ENCODE measurements at regions of chr12 and their contacts with region 1.

Region 1: DNA sequence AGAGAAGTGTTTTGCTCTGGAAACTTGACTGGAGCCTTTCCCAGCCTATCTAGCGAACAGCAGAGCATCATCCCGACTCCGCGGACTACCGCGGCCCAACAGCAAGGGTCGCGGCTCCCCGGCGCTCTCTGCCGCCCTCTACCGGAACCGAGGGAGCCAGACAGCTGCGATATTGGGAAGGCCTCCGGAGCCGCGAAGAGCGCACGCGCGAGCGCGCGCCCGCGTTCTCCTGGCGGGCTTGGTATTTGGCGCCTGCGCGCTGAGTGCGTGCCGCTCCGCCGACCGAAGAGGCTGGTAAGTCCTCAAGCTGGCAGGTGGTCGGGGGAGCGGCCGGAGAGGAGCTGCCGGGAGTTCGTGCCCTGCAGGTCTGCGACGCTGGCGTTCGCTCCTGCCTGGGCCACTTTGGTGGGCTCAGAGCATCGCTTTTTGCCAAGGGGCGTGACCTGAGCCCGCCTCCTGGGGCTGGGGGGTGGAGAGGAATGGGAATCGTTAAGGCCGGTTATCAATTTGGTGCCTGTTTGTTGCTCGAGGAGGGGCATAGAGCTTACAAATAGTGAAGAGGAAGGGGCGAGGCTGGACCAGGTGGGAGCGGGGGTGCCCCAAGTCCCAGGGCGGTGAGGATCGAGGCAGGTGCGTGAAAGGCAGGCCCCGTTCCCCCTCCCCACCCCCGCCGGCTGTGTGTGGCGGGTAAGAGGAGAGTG is at the start of gene TMEM106C:
- DNase-seq: peak; percentile 96
- ATAC-seq: peak; percentile 98
- H3K4me3 Mint-ChIP-seq: peak within 1 kb of the TSS; percentile 99
- H3K27ac Mint-ChIP-seq: peak within 1 kb of the TSS; percentile 87
- H3K4me1 Mint-ChIP-seq: peaks cover 34% of the 10 kb centered on the region
- H3K27me3 Mint-ChIP-seq: peaks cover 2% of the 10 kb centered on the region
- total RNA-seq, gene TMEM106C: 159 to 248 TPM

Region 2: DNA sequence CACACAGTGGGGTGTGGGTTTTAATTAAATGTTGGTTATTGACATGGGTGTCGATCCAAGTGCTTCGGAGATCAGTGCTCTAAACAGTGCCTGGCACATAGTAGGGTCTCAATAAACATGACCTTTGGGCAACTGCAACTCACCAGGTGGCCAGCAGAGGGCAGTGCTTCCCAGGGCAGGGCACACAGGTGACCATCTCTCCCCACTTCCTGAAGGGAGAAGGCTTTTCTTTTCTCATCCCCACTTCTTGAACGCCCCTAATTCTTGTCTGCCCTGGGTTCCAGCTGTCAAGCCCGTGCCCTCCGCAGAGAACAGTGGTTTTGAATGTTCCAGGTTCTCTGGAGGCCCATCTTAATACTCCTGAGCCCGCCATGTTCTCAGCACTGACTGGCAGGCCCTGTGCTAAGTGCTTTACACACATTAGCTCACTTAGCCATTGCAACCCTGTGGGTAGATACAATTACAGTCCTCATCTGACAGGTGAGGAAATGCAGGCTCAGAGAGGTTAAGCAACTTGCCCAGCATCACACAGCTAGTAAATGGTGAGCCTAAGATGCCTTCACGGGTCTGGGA is 221.2 kb before region 1 on chr12:
- CTCF ChIA-PET with region 1: interaction called, 10 read pairs
- POLR2A ChIA-PET with region 1: no interaction called
- intact Hi-C with region 1: no loop called
- DNase-seq: peak; percentile 88
- ATAC-seq: peak; percentile 59
- H3K4me3 Mint-ChIP-seq: no peak overlapping the region
- H3K27ac Mint-ChIP-seq: no peak overlapping the region
- H3K4me1 Mint-ChIP-seq: peaks cover 17% of the 10 kb centered on the region
- H3K27me3 Mint-ChIP-seq: peaks cover 2% of the 10 kb centered on the region

Region 3: DNA sequence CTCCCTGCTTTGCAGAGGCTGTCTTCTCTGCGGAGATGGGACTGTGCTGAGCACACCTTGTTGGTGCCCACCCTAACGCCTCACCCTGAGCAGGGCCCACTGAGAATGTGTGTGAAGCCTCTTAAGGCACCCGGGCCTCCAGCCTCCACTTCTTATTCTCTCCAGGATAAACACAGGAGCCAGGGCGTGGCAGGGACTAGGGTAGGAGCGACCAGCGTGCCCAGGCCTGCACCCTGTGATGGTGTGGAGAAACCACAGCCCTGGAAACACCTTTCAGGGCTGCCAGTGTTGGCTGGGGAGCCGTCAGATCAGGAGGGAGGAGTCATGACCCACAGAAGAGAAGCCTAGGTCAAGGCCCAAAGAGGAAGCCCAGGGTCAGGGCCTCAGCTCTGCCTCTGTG is 100.0 kb before region 1 on chr12:
- CTCF ChIA-PET with region 1: interaction called, 6 read pairs
- POLR2A ChIA-PET with region 1: interaction called, 3 read pairs
- intact Hi-C with region 1: loop called (anchors 1 to 5 kb)
- DNase-seq: no peak
- ATAC-seq: no peak
- H3K4me3 Mint-ChIP-seq: no peak overlapping the region
- H3K27ac Mint-ChIP-seq: peak overlapping the region; percentile 31
- H3K4me1 Mint-ChIP-seq: peaks cover 73% of the 10 kb centered on the region
- H3K27me3 Mint-ChIP-seq: no peaks in the 10 kb centered on the region

Region 4: GRCh38 chr12:47904713-47905310 is 58.7 kb before region 1 on chr12 and contains the start of gene VDR:
- CTCF ChIA-PET with region 1: interaction called, 12 read pairs
- POLR2A ChIA-PET with region 1: no interaction called
- intact Hi-C with region 1: loop called (anchors 1 to 2 kb)
- DNase-seq: peak; percentile 88
- ATAC-seq: peak; percentile 76
- H3K4me3 Mint-ChIP-seq: peak within 1 kb of the TSS; percentile 94
- H3K27ac Mint-ChIP-seq: peak within 1 kb of the TSS; percentile 92
- H3K4me1 Mint-ChIP-seq: peaks cover 45% of the 10 kb centered on the region
- H3K27me3 Mint-ChIP-seq: peaks cover 20% of the 10 kb centered on the region
- total RNA-seq, gene VDR: 108 to 124 TPM

Region 5: GRCh38 chr12:48001505-48002413 is 38.3 kb after region 1 on chr12:
- CTCF ChIA-PET with region 1: no interaction called
- POLR2A ChIA-PET with region 1: no interaction called
- intact Hi-C with region 1: loop called in 1 of 2 experiments (anchors 2 kb)
- DNase-seq: peak; percentile 24
- ATAC-seq: peak; percentile 27
- H3K4me3 Mint-ChIP-seq: peak overlapping the region; percentile 65
- H3K27ac Mint-ChIP-seq: no peak overlapping the region
- H3K4me1 Mint-ChIP-seq: peaks cover 32% of the 10 kb centered on the region
- H3K27me3 Mint-ChIP-seq: peaks cover 76% of the 10 kb centered on the region

Region 6: GRCh38 chr12:48165094-48165981 is 201.8 kb after region 1 on chr12:
- CTCF ChIA-PET with region 1: interaction called, 3 read pairs
- POLR2A ChIA-PET with region 1: no interaction called
- intact Hi-C with region 1: loop called in 1 of 2 experiments (anchors 1 kb)
- DNase-seq: peak; percentile 62
- ATAC-seq: peak; percentile 84
- H3K4me3 Mint-ChIP-seq: no peak overlapping the region
- H3K27ac Mint-ChIP-seq: no peak overlapping the region
- H3K4me1 Mint-ChIP-seq: peaks cover 7% of the 10 kb centered on the region
- H3K27me3 Mint-ChIP-seq: no peaks in the 10 kb centered on the region

Region 7: GRCh38 chr12:48197971-48198671 is 234.6 kb after region 1 on chr12:
- CTCF ChIA-PET with region 1: interaction called, 3 read pairs
- POLR2A ChIA-PET with region 1: no interaction called
- intact Hi-C with region 1: loop called in 1 of 2 experiments (anchors 1 kb)
- DNase-seq: peak; percentile 97
- ATAC-seq: peak; percentile 98
- H3K4me3 Mint-ChIP-seq: peak overlapping the region; percentile 80
- H3K27ac Mint-ChIP-seq: peak overlapping the region; percentile 99
- H3K4me1 Mint-ChIP-seq: peaks cover 30% of the 10 kb centered on the region
- H3K27me3 Mint-ChIP-seq: peaks cover 4% of the 10 kb centered on the region

Measured in activated CD4-positive, alpha-beta T cell treated with anti-CD3 and anti-CD28 coated beads for 36 hours (primary cell).